Calu3 (cell line): ENCODE measurements at regions of chr6 and their contacts with region 1.

Region 1: DNA sequence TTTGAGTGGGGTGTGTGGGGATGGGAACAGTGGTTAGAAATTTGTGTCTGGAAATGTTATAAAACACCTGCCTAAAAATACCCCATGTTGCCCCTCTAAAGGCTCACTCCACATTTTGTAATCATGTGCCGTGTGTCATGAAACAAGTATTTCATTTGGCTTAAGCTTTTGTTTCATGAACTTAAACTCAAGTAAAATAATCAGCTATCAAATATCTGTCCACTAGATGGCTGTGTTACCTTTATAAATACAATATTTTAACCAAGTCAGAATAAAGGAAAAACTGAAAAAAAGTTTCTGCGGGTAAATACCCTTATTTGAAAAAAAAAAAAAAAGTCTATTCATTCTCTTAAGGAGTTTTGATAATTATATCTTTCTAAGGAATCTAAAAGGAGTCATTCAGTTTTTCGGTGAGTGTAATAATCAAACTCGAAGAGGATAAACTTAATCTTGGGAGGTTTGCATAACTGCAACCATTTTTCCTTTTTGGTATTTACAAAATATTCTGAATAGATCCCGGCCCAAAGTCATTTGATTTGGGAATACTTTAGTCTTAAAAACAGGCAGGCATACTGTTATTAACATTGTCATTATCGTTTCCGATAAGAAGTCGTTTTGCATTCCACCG is 29.9 kb upstream of the MTRF1L start:
- DNase-seq: no peak
- H3K4me3 Mint-ChIP-seq: no peak overlapping the region
- H3K27ac Mint-ChIP-seq: peak overlapping the region; percentile 4
- H3K4me1 Mint-ChIP-seq: peaks cover 20% of the 10 kb centered on the region
- H3K27me3 Mint-ChIP-seq: no peaks in the 10 kb centered on the region
- CTCF ChIP-seq: no peak

Region 2: GRCh38 chr6:153051801-153052200 is 19.4 kb after region 1 on chr6:
- CTCF ChIA-PET with region 1: no interaction called
- intact Hi-C with region 1: no loop called
- DNase-seq: no peak
- H3K4me3 Mint-ChIP-seq: no peak overlapping the region
- H3K27ac Mint-ChIP-seq: no peak overlapping the region
- H3K4me1 Mint-ChIP-seq: no peaks in the 10 kb centered on the region
- H3K27me3 Mint-ChIP-seq: no peaks in the 10 kb centered on the region
- CTCF ChIP-seq: no peak

Region 3: GRCh38 chr6:153108315-153108714 is 75.9 kb after region 1 on chr6:
- CTCF ChIA-PET with region 1: interaction called, 4 read pairs
- intact Hi-C with region 1: loop called (anchors 5 kb)
- DNase-seq: no peak
- H3K4me3 Mint-ChIP-seq: no peak overlapping the region
- H3K27ac Mint-ChIP-seq: no peak overlapping the region
- H3K4me1 Mint-ChIP-seq: peaks cover 10% of the 10 kb centered on the region
- H3K27me3 Mint-ChIP-seq: no peaks in the 10 kb centered on the region
- CTCF ChIP-seq: no peak

Region 4: DNA sequence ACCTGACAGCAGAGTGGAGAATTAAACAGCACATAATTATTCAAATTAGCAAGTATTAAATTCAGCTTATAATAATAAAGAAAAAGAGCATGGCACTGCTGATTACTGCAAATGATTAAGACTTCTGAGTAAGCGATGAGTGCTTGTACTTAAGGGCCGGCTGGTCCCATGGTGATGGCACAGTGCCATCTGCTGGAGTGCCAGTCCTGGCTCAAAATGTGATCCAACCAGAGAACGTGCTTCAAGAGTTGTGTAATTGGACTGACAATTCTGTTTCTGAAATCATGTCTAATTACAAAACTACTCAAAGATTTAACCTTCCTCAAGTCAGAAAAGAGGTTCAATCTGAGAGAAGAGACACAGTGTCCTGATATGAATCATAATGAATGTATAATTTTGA is 280.3 kb after region 1 on chr6:
- CTCF ChIA-PET with region 1: interaction called, 10 read pairs
- intact Hi-C with region 1: loop called (anchors 1 kb)
- DNase-seq: peak; percentile 61
- H3K4me3 Mint-ChIP-seq: no peak overlapping the region
- H3K27ac Mint-ChIP-seq: no peak overlapping the region
- H3K4me1 Mint-ChIP-seq: no peaks in the 10 kb centered on the region
- H3K27me3 Mint-ChIP-seq: peaks cover 22% of the 10 kb centered on the region
- CTCF ChIP-seq: no peak

Region 5: DNA sequence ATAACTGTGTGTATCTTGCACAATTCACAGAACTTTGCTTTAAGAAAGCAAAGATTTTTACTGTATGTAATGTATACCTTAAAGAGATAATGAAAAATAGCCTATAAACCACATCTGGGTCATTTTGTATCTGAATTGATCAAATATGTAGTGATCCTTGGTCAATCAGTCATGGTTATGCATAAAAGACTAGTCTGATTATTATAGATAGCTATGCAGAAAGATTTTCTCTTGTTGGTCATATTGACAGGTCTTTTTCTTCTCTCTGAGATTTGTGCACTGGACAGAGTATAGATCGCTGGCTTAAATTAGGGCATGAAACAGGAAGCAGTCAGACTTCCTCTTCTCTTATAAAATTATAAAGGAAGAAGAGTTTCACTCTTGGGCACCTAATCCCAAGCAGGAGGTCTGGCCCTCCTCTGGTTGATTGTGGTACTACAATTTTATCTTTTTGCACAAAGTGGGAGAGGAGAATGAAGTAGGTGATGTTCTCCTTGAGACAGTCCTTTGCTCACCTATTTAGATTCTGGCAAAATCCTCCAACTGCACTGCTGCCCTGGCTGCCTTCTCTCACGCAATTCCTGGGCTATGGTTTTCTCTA is 479.6 kb after region 1 on chr6:
- CTCF ChIA-PET with region 1: no interaction called
- intact Hi-C with region 1: loop called (anchors 10 kb)
- DNase-seq: peak; percentile 30
- H3K4me3 Mint-ChIP-seq: no peak overlapping the region
- H3K27ac Mint-ChIP-seq: no peak overlapping the region
- H3K4me1 Mint-ChIP-seq: no peaks in the 10 kb centered on the region
- H3K27me3 Mint-ChIP-seq: no peaks in the 10 kb centered on the region
- CTCF ChIP-seq: peak; percentile 42